Panc1 (cell line): ENCODE measurements at regions of chr6 and their contacts with region 1.

Region 1: DNA sequence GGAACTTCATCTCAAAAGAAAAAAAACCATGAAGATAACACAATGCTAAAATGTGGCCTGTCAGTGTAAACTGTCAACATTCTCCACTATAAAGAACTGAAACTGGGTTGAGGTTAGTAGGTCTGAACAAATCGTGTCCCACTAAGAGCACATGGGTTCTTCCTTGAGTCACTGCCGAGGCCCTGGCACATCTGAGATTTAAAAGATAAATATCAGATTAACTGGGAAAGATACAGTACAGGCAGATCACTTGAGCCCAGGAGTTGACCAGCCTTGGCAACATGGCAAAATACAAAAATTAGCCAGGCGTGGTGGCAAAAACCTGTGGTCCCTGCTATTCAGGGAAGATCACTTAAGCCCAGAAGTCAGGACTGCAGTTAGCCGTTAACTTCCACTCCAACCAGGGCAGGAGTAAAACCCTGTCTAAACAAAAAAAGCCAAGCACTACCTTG is 5.6 kb downstream of the EEF1A1 start:
- DNase-seq: no peak
- ATAC-seq: peak; percentile 19
- H3K4me3 ChIP-seq: peak overlapping the region; percentile 49 to 86
- H3K27ac ChIP-seq: peak overlapping the region; percentile 83
- H3K4me1 ChIP-seq: peaks cover 28% of the 10 kb centered on the region
- H3K27me3 ChIP-seq: no peaks in the 10 kb centered on the region
- CTCF ChIP-seq: no peak; the same call in 1 of the 2 replicates

Region 2: DNA sequence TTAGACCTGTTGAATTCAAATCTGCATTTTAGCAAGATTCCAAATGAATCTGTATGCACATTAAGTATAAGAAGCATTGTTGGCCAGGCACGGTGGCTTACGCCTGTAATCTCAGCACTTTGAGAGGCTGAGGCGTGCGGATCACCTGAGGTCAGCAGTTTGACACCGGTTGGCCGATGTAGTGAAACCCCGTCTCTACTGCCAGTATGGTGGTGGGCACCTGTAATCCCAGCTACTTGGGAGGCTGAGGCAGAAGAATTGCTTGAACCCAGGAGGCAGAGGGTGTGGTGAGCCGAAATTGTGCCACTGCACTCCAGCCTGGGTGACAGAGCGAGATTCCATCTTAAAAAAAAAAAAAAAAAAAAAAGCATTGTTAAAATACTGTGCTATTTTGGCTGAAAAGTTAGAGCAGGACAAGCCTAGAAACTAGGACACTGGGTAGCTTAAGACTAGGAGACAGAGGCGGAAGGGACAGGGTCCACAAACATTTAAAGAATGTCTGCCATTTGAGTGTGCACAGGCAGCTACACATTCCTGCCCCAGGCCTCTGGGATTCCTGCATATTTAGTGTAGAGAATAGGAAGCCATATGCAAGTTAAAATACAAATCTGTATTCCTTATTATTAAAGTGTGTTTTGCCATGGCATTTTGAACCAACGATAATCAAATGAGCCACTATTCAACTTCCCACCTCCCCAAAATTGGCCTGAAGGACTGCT is 50.7 kb after region 1 on chr6:
- CTCF ChIA-PET with region 1: no interaction called
- POLR2A ChIA-PET with region 1: interaction called, 14 read pairs
- in situ Hi-C with region 1: no loop called
- intact Hi-C with region 1: no loop called
- DNase-seq: no peak
- ATAC-seq: peak; percentile 70
- H3K4me3 ChIP-seq: no peak overlapping the region
- H3K27ac ChIP-seq: peak overlapping the region; percentile 82
- H3K4me1 ChIP-seq: peaks cover 21% of the 10 kb centered on the region
- H3K27me3 ChIP-seq: no peaks in the 10 kb centered on the region
- CTCF ChIP-seq: no peak

Region 3: DNA sequence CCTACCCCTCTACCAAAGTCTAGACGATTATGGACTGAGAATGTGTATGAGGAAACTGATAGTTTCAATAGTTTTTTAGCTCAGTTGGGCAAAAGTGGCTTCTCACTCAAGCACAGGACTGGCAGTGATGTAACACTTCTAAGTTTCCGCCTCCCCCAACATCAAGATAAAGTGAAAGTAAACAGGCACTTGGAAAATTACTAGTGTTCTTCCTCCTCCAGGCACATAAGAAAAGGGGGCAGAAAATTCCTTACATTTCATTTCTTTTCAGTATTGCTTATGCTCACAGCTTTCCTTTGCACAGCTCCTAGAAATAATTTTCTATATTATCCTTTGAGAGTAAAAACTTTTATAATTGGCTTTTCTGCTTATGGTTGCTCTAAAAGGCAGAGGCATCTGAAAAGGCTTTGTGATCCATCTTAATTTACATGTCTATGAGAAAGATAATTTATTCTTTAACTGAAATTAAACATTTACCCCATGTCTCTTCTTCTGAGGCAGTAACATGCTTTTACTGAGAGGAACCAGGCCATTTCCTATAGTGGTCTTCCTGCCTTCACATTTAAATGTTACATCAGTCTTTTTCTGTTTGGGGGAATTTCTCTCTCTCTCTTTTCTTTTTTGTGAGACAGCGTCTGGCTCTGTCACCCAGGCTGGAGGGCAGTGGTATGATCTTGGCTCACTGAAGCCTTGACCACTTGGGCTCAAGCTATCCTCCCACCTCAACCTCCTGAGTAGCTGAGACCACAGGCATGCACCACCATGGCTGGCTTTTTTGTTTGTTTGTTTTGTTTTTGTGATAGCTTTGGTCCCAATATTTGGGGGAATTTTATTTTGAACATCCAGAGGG is 70.6 kb after region 1 on chr6:
- CTCF ChIA-PET with region 1: interaction called, 7 read pairs
- POLR2A ChIA-PET with region 1: interaction called, 31 read pairs
- in situ Hi-C with region 1: no loop called
- intact Hi-C with region 1: loop called (anchors 2 kb)
- DNase-seq: peak; percentile 68
- ATAC-seq: peak; percentile 88
- H3K4me3 ChIP-seq: peak overlapping the region; percentile 18 to 19
- H3K27ac ChIP-seq: peak overlapping the region; percentile 100
- H3K4me1 ChIP-seq: peaks cover 36% of the 10 kb centered on the region
- H3K27me3 ChIP-seq: no peaks in the 10 kb centered on the region
- CTCF ChIP-seq: no peak

Region 4: GRCh38 chr6:73653571-73654424 is 138.6 kb after region 1 on chr6 and contains the start of gene SLC17A5:
- CTCF ChIA-PET with region 1: interaction called, 4 read pairs
- POLR2A ChIA-PET with region 1: interaction called, 8 read pairs
- in situ Hi-C with region 1: no loop called
- intact Hi-C with region 1: loop called (anchors 2 kb)
- DNase-seq: peak; percentile 75
- ATAC-seq: peak; percentile 97
- H3K4me3 ChIP-seq: peak within 1 kb of the TSS; percentile 73 to 98
- H3K27ac ChIP-seq: peak within 1 kb of the TSS; percentile 77
- H3K4me1 ChIP-seq: peaks cover 21% of the 10 kb centered on the region
- H3K27me3 ChIP-seq: no peaks in the 10 kb centered on the region
- CTCF ChIP-seq: no peak
- total RNA-seq, gene SLC17A5: 20.6 TPM

Region 5: DNA sequence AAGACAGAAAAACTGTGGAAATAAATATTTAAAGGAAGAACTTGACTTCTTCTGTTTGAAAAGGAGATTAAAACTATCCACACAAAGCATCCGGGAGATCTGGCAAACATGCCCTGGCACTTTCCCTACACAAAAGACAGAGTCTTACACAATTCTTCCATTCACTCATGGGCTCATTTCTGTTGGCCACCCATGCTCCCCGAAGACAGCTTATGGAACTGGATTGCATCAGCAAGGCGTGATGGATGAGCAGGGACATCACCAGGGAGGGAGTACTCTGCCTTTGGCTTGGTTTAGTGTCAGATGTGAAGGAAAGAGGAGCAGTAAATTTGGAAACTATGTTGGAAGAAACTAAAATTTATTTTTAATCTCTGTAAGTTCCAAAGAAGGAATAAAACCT is 560.1 kb after region 1 on chr6:
- CTCF ChIA-PET with region 1: no interaction called
- POLR2A ChIA-PET with region 1: no interaction called
- in situ Hi-C with region 1: no loop called
- intact Hi-C with region 1: no loop called
- DNase-seq: no peak
- ATAC-seq: no peak
- H3K4me3 ChIP-seq: no peak overlapping the region
- H3K27ac ChIP-seq: no peak overlapping the region
- H3K4me1 ChIP-seq: no peaks in the 10 kb centered on the region
- H3K27me3 ChIP-seq: 0 out of 2 replicates have a peak, but pooled peaks cover 2% of the 10 kb centered on the region
- CTCF ChIP-seq: no peak